H1 (cell line): ENCODE measurements at regions of chr11 and their contacts with region 1.

Region 1: DNA sequence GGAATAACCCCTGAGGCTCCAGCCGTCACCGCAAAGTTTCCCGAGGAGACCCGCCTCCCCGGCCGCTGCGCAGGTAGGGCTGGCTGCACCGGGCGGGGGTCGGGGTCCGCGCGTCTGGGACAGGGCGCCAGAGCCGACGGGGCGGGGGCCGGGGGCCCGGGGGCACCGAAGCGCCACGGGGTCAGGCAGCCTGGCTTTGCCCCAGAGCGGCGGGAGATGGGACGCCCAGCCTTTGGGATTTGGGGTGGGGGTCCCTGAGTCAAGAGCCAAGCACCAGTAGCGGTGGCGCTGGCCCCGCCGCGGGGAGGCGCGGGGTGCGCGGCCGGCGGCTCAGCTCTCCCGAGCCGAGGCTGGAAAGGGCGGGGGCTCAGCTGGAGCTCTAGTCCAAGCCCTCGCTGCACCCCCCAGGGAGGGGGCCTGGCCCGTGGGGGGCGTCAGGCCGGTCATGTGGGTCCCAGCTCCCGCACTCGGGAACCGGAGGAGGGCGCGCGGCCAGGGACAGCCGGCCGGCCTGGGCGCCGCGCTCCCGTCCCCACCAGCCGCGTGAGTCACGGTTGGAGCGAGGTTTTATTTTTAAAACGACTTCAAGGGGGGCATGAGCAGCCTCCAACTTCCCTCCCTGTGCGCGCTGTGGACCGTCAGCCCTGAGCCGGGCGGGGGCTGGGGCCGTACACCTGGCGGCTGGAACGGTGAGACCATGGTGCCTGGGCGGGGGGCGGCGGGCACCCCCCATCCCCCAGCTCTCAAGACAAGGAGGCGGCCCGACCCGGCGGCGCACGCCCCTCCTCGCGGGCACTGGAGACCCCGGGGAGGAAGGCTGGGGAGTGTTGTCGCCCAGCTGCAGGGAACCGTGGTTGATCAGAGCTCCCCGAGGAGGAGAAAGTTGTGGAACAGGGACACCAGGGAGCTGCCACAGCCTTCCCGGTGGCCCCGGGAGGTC is 626 bp downstream of the FLRT1 start:
- DNase-seq: no peak
- H3K4me3 ChIP-seq: peak overlapping the region; percentile 27 to 67 (median 42)
- H3K27ac ChIP-seq: no peak overlapping the region
- H3K4me1 ChIP-seq: peaks cover 5 to 16% (median 10%) of the 10 kb centered on the region in 4 experiments; a peak in 6 of 7 replicates
- H3K27me3 ChIP-seq: peaks cover 59 to 92% (median 83%) of the 10 kb centered on the region in 4 experiments
- CTCF ChIP-seq: no peak
- EP300 ChIP-seq: no peak
- POLR2A ChIP-seq: no peak
- RAD21 ChIP-seq: no peak

Region 2: GRCh38 chr11:63567044-63567840 is 469.1 kb before region 1 on chr11:
- CTCF ChIA-PET with region 1: no interaction called
- POLR2A ChIA-PET with region 1: no interaction called
- DNase-seq: no peak
- H3K4me3 ChIP-seq: no peak overlapping the region
- H3K27ac ChIP-seq: peak overlapping the region; percentile 19; the same call in 1 of the 2 replicates
- H3K4me1 ChIP-seq: peaks cover 0 to 5% (median 3%) of the 10 kb centered on the region in 4 experiments; a peak in 3 of 7 replicates
- H3K27me3 ChIP-seq: no peaks in the 10 kb centered on the region
- CTCF ChIP-seq: no peak
- EP300 ChIP-seq: peak in 1 of 2 experiments; percentile 75; a peak in 1 of 3 replicates
- POLR2A ChIP-seq: no peak
- RAD21 ChIP-seq: no peak

Region 3: DNA sequence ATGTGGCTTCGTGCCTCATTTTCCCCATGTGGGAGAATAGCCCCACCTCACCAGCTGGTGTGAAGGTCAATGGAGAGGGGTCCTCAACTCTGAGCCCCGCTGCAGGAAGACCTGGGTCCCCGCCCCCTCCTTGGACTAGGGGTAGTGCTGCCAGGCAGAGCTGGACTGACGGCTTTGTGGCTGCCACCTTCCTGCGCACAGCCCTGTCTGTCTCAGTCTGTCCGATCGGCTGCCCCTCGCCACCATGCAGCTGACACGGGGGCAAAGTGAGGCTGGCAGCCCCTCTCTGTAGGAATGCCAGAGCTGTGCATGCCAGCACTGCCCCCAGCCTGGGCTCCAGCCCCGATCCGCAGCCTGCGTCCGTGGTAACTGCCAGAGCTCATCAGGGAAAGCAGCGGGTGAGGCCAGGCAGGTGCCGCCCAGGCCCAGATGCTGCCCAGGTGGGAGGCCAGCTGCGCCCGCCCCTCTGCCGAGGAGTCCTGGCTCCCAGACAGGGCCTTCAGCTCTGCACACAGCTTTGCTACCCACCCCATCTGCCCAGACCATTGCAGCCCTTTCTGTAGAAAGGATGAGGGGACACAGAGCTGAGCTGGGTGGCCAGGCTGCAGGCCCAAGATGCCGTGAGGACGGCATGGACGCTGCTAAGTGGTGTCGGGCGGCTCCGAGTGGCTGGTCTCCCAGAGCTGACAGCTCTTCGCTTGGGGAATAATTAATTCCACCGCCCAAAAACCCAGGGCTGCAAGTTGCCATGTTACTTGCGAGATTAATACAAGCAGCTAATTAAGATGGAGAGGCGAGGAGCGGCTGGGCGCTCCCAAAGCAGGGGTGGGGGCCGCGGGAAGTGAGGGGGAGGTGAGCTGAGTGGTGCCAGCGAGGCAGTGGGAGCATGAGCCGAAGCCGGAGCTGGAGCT is 20.2 kb before region 1 on chr11:
- CTCF ChIA-PET with region 1: interaction called, 35 read pairs
- POLR2A ChIA-PET with region 1: interaction called, 3 read pairs
- DNase-seq: no peak
- H3K4me3 ChIP-seq: no peak overlapping the region
- H3K27ac ChIP-seq: no peak overlapping the region
- H3K4me1 ChIP-seq: peaks cover 0 to 13% (median 7%) of the 10 kb centered on the region in 4 experiments; a peak in 6 of 7 replicates
- H3K27me3 ChIP-seq: peaks cover 2 to 56% (median 32%) of the 10 kb centered on the region in 4 experiments
- CTCF ChIP-seq: no peak
- EP300 ChIP-seq: no peak
- POLR2A ChIP-seq: no peak
- RAD21 ChIP-seq: no peak

Region 4: GRCh38 chr11:64060861-64061444 is 24.6 kb after region 1 on chr11:
- CTCF ChIA-PET with region 1: interaction called, 42 read pairs
- POLR2A ChIA-PET with region 1: interaction called, 4 read pairs
- DNase-seq: peak in 1 of 2 experiments; percentile 89
- H3K4me3 ChIP-seq: peak overlapping the region; percentile 26 to 59 (median 35)
- H3K27ac ChIP-seq: no peak overlapping the region
- H3K4me1 ChIP-seq: peaks cover 0 to 10% (median 6%) of the 10 kb centered on the region in 4 experiments; a peak in 6 of 7 replicates
- H3K27me3 ChIP-seq: peaks cover 16 to 87% (median 70%) of the 10 kb centered on the region in 4 experiments
- CTCF ChIP-seq: no peak
- EP300 ChIP-seq: no peak
- POLR2A ChIP-seq: no peak
- RAD21 ChIP-seq: no peak

Region 5: GRCh38 chr11:64088162-64089026 is 52.0 kb after region 1 on chr11:
- CTCF ChIA-PET with region 1: interaction called, 10 read pairs
- POLR2A ChIA-PET with region 1: no interaction called
- DNase-seq: peak; percentile 38 to 72
- H3K4me3 ChIP-seq: no peak overlapping the region
- H3K27ac ChIP-seq: no peak overlapping the region
- H3K4me1 ChIP-seq: peaks cover 0 to 8% (median 5%) of the 10 kb centered on the region in 4 experiments; a peak in 6 of 7 replicates
- H3K27me3 ChIP-seq: peaks cover 2 to 60% (median 31%) of the 10 kb centered on the region in 4 experiments
- CTCF ChIP-seq: peak in 2 of 3 experiments; percentile 82 to 85; a peak in 3 of 4 replicates
- EP300 ChIP-seq: no peak
- POLR2A ChIP-seq: no peak
- RAD21 ChIP-seq: peak; percentile 63 to 70

Region 6: DNA sequence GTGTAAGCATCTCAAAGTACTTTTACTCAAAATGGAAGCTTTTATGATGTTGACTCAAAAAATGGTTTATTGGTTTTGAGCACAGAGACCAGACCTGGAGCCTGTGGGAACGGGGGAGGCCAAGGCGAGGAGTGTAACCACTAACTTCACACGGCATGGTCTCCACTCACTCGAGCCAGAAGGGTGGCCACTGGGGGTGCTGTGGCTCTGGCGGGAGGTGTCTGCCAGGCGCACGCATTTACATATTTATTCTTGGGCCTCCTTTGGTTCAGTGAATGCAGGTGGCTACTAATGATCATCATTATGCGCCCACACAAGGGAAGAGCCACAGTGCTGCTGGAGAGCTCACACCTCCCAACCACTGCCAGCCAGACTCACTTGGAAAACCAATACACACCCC is 64.0 kb after region 1 on chr11:
- CTCF ChIA-PET with region 1: interaction called, 14 read pairs
- POLR2A ChIA-PET with region 1: no interaction called
- DNase-seq: no peak
- H3K4me3 ChIP-seq: no peak overlapping the region
- H3K27ac ChIP-seq: no peak overlapping the region
- H3K4me1 ChIP-seq: no peaks in the 10 kb centered on the region; a peak in 3 of 7 replicates
- H3K27me3 ChIP-seq: peaks cover 2 to 57% (median 37%) of the 10 kb centered on the region in 4 experiments
- CTCF ChIP-seq: peak; percentile 52 to 83 (median 68)
- EP300 ChIP-seq: no peak
- POLR2A ChIP-seq: no peak
- RAD21 ChIP-seq: peak; percentile 48 to 58